ENCODE measurements at regions of chrX and their contacts with region 1.

Region 1: GRCh38 chrX:49043220-49043986 is at the start of gene TFE3:
- DNase-seq: peak; percentile 90
- H3K4me3 ChIP-seq: peak within 1 kb of the TSS; percentile 58
- H3K27ac ChIP-seq: peak within 1 kb of the TSS; percentile 75
- H3K4me1 ChIP-seq: peaks cover 13% of the 10 kb centered on the region
- H3K27me3 ChIP-seq: no peaks in the 10 kb centered on the region
- CTCF ChIP-seq: peak; percentile 44; the same call in 1 of the 2 replicates
- total RNA-seq, gene TFE3: 27.2 and 33.7 TPM in 2 replicates

Region 2: DNA sequence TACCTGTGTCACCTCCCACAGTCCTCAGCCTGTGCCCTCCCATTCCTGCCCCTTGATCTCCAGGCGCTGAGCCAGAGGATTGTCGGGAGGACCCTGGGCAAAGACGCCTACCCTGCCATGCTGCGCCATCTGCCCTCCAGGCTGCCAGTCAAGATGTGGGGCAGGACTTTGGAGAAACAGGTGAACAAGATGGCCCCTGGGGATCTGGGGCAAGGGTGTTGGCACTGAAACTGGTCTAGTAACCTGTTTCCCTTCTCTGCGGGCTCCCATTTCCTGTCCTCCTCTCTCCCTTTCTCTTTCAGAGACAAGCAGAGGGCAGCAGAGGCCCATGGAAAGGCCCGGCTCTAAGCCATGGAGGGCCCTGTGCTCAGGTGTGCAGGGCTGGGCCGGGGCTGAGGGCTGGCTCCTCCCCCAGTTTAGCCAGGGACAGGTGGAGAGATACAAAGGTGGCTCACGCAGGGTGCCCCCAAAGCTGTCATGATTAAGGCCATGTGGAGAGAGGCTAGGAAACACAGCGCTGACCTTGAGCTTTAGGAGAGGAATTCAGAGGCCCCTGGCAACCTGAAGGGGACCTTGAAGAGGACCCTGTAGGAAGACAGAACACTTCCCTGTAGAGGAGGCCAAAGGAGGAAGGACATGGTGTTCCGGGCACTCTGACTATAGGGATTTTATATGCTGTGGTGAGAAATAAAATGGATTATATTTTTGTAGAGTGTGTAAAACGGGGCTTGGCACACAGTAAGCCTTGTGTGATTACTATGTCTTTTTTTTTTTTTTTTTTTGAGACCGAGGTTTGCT is 281.5 kb before region 1 on chrX and contains the start of gene GLOD5:
- CTCF ChIA-PET with region 1: no interaction called
- POLR2A ChIA-PET with region 1: no interaction called
- intact Hi-C with region 1: loop called (anchors 5 kb)
- DNase-seq: peak; percentile 74
- H3K4me3 ChIP-seq: peak within 1 kb of the TSS; percentile 24; the same call in 1 of the 2 replicates
- H3K27ac ChIP-seq: peak within 1 kb of the TSS; percentile 53
- H3K4me1 ChIP-seq: 0 out of 2 replicates have a peak, but pooled peaks cover 5% of the 10 kb centered on the region
- H3K27me3 ChIP-seq: no peaks in the 10 kb centered on the region
- CTCF ChIP-seq: peak; percentile 53
- total RNA-seq, gene GLOD5: not detected in 2 replicates

Region 3: DNA sequence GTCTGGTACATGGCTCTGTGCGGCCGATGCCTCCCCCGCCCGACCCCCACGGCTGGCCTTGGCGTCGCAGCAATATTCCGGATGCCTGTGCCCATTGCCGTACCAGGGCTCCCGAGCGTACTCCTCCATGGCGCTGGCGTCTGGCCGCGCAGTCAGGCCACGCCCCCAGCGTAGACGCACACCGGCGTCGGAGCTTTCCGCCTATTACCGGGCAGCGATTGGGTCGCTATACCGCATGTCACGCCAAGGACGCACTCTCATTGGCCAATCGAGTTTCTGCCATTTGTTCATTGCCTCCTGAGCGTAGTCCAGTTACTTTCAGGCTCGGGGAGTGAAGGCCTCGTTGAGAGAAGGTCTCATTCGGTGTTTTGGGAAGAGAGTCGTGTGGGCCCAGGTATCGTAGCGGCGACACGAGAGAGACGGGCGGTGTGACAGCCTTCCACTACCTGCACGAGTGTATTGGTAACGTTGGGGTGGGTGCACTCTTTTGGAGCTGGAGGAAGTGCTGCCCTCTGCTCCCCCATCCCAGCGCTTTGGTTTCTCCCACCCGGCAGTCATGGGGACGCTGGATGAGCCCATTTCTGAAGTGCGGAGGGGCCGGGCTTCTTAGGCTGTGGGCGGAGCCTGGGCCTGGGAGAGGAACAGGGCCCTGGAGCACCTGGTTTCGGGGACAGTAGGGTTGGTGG is 145.6 kb before region 1 on chrX and contains the starts of genes PQBP1 and TIMM17B:
- CTCF ChIA-PET with region 1: no interaction called
- POLR2A ChIA-PET with region 1: no interaction called
- intact Hi-C with region 1: no loop called
- DNase-seq: peak; percentile 77 to 86
- H3K4me3 ChIP-seq: peak within 1 kb of the TSS; percentile 59
- H3K27ac ChIP-seq: peak within 1 kb of the TSS; percentile 84
- H3K4me1 ChIP-seq: no peaks in the 10 kb centered on the region
- H3K27me3 ChIP-seq: no peaks in the 10 kb centered on the region
- CTCF ChIP-seq: no peak
- total RNA-seq, gene PQBP1: 36.4 and 39.4 TPM in 2 replicates
- total RNA-seq, gene TIMM17B: 44.9 and 54.1 TPM in 2 replicates

Region 4: GRCh38 chrX:49002091-49002935 is 41.1 kb before region 1 on chrX and contains the start of gene GRIPAP1:
- CTCF ChIA-PET with region 1: no interaction called
- POLR2A ChIA-PET with region 1: interaction called, 25 read pairs
- intact Hi-C with region 1: loop called (anchors 5 kb)
- DNase-seq: peak; percentile 42 to 60
- H3K4me3 ChIP-seq: peak within 1 kb of the TSS; percentile 64
- H3K27ac ChIP-seq: peak within 1 kb of the TSS; percentile 92
- H3K4me1 ChIP-seq: no peaks in the 10 kb centered on the region
- H3K27me3 ChIP-seq: no peaks in the 10 kb centered on the region
- CTCF ChIP-seq: no peak
- total RNA-seq, gene GRIPAP1: 33.6 and 35.2 TPM in 2 replicates

Region 5: DNA sequence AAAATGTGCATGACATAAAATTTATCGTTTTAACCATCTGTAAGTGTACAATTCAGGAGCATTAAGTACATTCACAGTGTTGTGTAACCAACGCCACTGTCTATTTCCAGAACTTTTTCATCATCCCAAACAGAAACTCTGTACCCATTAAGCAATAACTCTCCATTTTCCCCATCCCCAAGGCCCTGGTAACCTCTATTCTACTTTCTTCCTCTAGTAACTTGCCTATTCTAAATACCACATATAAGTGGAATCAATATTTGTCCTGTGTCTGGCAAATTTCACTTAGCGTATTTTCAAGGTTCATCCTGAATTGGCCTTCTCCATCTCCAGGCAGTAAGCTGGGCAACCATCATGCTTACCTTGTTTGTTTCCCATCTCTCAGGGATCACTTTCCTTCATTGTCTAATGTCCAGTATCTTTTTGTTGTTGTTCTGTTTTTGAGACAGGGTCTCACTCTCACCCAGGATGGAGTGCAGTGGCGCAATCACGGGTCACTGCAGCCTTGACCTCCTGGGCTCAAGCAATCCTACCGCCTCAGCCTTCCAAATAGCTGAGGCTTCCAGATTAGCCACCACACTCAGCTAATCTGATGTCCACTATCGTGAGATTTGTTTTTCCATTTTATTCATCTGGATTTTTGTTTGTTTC is 23.7 kb before region 1 on chrX:
- CTCF ChIA-PET with region 1: no interaction called
- POLR2A ChIA-PET with region 1: no interaction called
- intact Hi-C with region 1: no loop called
- DNase-seq: no peak
- H3K4me3 ChIP-seq: no peak overlapping the region
- H3K27ac ChIP-seq: no peak overlapping the region
- H3K4me1 ChIP-seq: no peaks in the 10 kb centered on the region
- H3K27me3 ChIP-seq: no peaks in the 10 kb centered on the region
- CTCF ChIP-seq: no peak

Region 6: DNA sequence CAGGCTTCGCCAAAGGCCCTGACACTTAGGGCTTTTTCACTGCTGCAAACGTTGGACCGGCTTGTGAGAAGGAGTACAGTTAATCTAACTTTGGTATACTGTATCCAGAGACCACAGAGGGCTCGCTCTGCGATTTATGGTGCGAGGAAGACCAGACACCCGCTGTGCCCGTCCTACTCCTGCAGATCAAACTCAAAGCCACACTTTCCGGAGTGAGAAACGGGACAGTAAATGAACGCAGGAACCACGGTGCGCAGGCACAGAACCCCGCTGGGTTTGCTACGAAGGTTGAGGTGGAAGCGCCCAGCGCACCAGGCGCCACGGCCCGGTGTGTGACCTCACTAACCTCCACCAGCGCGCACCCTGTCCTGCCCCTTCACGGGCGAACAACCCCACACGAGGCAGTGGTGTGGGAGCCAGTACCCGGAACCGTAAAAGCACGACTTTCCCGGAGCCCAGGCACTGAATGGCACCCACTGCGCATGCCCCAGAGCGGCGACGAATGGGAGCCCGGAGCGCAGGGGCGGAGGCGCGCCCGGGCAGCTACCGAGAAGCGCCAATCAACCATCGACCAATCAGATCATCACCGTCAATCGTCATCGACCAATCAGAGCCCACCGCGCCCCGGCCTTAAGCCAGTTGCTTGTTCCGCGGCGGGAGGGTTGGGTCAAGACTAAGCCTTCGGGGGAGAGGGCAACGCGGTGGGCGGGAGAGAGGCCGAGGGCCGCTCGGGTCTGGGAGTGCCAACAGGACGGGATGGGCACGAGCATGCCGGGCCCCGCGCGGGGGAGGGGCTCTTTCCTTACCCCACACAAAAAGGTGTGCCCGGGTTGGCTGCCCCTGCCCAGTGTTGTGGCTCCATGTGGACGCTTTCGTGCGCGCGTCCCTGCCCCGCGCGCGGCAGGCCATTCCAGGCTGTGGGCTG is 57.6 kb after region 1 on chrX:
- CTCF ChIA-PET with region 1: no interaction called
- POLR2A ChIA-PET with region 1: interaction called, 3 read pairs
- intact Hi-C with region 1: loop called (anchors 5 kb)
- DNase-seq: peak; percentile 75 to 84
- H3K4me3 ChIP-seq: peak overlapping the region; percentile 56; the same call in 1 of the 2 replicates
- H3K27ac ChIP-seq: peak overlapping the region; percentile 46
- H3K4me1 ChIP-seq: no peaks in the 10 kb centered on the region
- H3K27me3 ChIP-seq: no peaks in the 10 kb centered on the region
- CTCF ChIP-seq: no peak

Region 7: GRCh38 chrX:49191033-49191871 is 147.8 kb after region 1 on chrX:
- CTCF ChIA-PET with region 1: no interaction called
- POLR2A ChIA-PET with region 1: no interaction called
- intact Hi-C with region 1: loop called (anchors 10 kb)
- DNase-seq: peak; percentile 79 to 95
- H3K4me3 ChIP-seq: peak overlapping the region; percentile 57; the same call in 1 of the 2 replicates
- H3K27ac ChIP-seq: 0 out of 2 replicates have a peak overlapping the region, but pooled peaks have one; percentile 23
- H3K4me1 ChIP-seq: no peaks in the 10 kb centered on the region
- H3K27me3 ChIP-seq: no peaks in the 10 kb centered on the region
- CTCF ChIP-seq: no peak

Measured in PC-9 (cell line).